Activated CD4-positive, alpha-beta T cell treated with anti-CD3 and anti-CD28 coated beads, Interleukin-2, amount 10 ng/mL, durations not matched to agents 24 days and 14 days (primary cell): ENCODE measurements at regions of chr12 and their contacts with region 1.

Region 1: DNA sequence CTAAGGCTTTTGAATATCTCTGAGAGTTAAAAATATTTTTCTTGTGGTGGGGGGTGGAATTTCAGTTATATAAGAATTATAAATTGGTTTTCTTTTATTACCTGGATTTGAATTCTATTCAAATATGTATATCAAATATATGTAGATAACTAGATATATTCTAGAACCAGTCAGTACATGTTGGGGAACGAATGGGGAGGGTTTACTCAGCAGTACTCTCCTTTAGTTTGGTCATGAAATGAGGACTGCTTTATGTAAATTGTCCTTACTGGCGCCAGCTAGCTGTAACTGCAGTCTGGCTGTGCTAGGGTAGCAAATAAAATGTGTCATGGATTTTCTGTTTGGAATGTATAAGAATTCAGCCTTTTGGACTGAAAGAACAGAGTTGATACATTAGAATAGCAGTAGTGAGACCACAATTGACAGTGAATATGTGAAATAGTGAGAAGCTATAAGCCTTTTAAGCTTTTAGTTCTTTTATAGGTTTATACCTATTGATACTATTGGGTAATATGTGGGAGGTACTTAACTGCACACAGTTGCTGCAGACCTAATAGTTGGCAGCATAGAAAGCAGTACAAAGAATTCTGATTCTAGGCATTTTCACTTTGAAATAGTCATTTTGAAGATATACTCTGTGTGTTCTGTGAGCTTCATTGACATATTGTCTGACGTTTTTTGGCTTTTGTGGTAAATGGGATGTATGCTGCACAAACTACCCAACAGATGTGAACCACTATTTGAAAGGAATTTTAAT is 29.0 kb downstream of the ATF7IP start:
- DNase-seq: peak; percentile 84
- H3K4me3 Mint-ChIP-seq: peak overlapping the region; percentile 78
- H3K27ac Mint-ChIP-seq: peak overlapping the region; percentile 93
- H3K4me1 Mint-ChIP-seq: peaks cover 59% of the 10 kb centered on the region
- H3K27me3 Mint-ChIP-seq: no peaks in the 10 kb centered on the region

Region 2: GRCh38 chr12:14373217-14373616 is 21.3 kb before region 1 on chr12:
- intact Hi-C with region 1: loop called (anchors 1 kb)
- DNase-seq: no peak
- H3K4me3 Mint-ChIP-seq: peak overlapping the region; percentile 7
- H3K27ac Mint-ChIP-seq: peak overlapping the region; percentile 26
- H3K4me1 Mint-ChIP-seq: peaks cover 38% of the 10 kb centered on the region
- H3K27me3 Mint-ChIP-seq: no peaks in the 10 kb centered on the region

Region 3: DNA sequence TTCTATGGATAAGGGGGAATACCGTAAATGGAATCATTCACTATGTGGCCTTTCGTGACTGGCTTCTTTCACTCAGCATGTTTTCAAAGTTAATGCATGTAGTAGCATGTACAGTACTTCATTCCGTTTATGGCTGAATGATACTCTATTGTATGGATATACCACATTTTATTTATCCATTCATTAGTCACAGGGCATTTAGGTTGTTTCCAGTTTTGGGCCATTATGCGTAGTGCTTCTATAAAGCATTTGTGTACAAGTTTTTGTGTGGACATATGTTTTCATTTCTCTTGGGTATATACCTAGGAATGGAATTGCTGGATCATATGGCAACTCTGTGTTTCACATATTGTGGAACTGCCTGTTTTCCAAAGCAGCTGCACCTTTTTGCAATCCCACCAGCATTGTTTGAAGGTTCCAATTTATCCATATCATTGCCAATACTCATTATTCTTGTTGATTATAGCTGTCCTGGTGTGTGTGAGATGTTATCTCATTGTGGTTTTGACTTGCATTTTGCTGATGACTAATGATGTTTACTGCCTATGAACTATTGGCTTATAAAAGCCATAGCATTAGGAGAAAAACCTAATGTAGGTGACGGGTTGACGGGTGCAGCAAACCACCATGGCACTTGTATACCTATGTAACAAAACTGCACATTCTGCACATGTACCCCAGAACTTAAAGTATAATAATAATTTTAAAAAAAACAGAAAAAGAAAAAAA is 16.5 kb after region 1 on chr12:
- intact Hi-C with region 1: loop called (anchors 1 kb)
- DNase-seq: peak; percentile 71
- H3K4me3 Mint-ChIP-seq: peak overlapping the region; percentile 43
- H3K27ac Mint-ChIP-seq: peak overlapping the region; percentile 61
- H3K4me1 Mint-ChIP-seq: peaks cover 36% of the 10 kb centered on the region
- H3K27me3 Mint-ChIP-seq: no peaks in the 10 kb centered on the region

Region 4: GRCh38 chr12:14417715-14418114 is 23.2 kb after region 1 on chr12:
- intact Hi-C with region 1: loop called (anchors 1 kb)
- DNase-seq: peak; percentile 90
- H3K4me3 Mint-ChIP-seq: peak overlapping the region; percentile 62
- H3K27ac Mint-ChIP-seq: peak overlapping the region; percentile 85
- H3K4me1 Mint-ChIP-seq: peaks cover 37% of the 10 kb centered on the region
- H3K27me3 Mint-ChIP-seq: no peaks in the 10 kb centered on the region

Region 5: DNA sequence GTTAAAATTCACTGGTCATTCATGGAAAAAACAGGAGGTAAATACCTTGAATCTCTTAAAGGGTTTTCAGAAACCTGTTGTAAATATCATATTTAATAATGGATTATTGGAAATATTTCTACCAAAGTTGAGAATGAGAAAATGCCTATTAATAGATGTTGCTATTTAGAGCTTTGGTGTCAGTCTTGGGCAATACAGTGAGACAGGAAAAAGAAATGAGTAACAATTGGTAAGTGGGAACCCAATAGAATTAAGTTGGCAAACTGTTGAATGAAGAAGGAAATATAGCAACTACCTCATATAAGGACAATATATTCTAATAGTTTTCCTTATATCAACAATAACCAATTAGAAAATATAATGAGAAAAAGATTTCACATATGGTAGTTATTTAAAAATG is 49.0 kb after region 1 on chr12:
- intact Hi-C with region 1: no loop called
- DNase-seq: no peak
- H3K4me3 Mint-ChIP-seq: no peak overlapping the region
- H3K27ac Mint-ChIP-seq: no peak overlapping the region
- H3K4me1 Mint-ChIP-seq: peaks cover 7% of the 10 kb centered on the region
- H3K27me3 Mint-ChIP-seq: no peaks in the 10 kb centered on the region